ENCODE measurements at regions of chr1 and their contacts with region 1.

Region 1: GRCh38 chr1:59220356-59220755 is 76.5 kb upstream of the FGGY start:
- DNase-seq: no peak
- ATAC-seq: no peak
- H3K4me3 ChIP-seq: no peak overlapping the region
- H3K27ac ChIP-seq: no peak overlapping the region
- H3K4me1 ChIP-seq: no peaks in the 10 kb centered on the region
- H3K27me3 ChIP-seq: no peaks in the 10 kb centered on the region
- CTCF ChIP-seq: no peak

Region 2: DNA sequence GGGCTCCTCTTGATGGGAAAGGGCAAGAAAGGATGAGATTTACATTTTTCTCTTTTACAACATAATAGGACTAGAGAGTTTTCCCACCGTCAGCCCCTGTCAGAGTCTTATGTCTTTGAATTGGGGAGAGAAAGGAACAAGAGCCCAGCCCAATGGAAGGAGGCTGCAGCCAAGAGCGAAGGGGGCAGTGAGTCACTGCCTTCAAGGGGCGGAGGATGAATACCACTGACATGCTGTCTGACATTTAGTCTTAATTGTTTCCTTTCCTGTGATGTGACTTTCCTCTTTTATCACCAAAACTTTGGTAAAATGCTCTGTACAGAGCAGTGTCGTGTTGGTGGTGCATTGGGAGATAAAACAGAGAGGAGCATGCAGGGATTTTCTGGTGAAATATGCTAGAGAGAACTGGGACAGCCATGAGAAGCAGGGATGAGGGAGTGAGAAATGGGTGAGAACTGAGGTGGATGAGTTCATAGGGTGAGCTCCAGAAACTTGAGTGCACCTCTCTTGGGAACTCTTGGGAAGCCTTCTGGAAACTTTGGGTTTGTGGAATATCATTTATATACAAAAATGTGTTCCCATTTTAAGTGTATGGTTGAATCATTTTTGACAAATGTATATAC is 103.3 kb before region 1 on chr1:
- CTCF ChIA-PET with region 1: no interaction called
- POLR2A ChIA-PET with region 1: no interaction called
- in situ Hi-C with region 1: no loop called
- intact Hi-C with region 1: no loop called
- DNase-seq: no peak
- ATAC-seq: no peak
- H3K4me3 ChIP-seq: no peak overlapping the region
- H3K27ac ChIP-seq: no peak overlapping the region
- H3K4me1 ChIP-seq: no peaks in the 10 kb centered on the region
- H3K27me3 ChIP-seq: no peaks in the 10 kb centered on the region
- CTCF ChIP-seq: no peak

Region 3: DNA sequence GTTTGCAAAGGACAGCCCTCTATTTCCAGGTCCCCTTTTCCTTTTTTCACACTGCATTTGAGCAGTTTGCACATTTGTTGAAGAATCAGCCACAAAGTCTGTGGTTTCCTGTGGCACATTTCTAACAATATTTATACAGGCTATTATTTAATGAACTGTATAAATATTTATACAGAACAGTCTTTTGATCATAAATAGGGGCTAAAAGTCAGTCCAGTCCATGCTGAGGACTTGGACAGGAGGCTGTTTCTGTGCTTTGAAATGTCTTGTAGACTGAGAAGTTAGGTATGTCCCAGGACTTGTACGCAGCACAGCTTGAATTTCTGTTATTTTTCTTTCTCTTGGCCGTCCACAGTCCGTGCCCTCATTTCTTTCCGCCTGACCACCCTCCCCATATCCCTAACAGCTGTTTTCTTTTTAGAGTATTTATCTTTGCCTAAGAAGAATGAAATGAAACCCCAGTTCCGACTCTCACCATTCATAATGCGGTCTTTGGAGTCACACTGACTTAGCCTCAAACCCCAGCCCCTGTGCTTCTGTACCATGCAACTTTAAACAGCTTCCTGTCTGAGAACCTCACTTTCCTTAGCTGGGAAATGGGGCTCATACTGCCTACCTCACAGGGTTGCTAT is 96.3 kb after region 1 on chr1:
- CTCF ChIA-PET with region 1: no interaction called
- POLR2A ChIA-PET with region 1: interaction called, 16 read pairs
- in situ Hi-C with region 1: no loop called
- intact Hi-C with region 1: no loop called
- DNase-seq: no peak
- ATAC-seq: no peak
- H3K4me3 ChIP-seq: no peak overlapping the region
- H3K27ac ChIP-seq: no peak overlapping the region
- H3K4me1 ChIP-seq: no peaks in the 10 kb centered on the region; the same call in 1 of the 2 replicates
- H3K27me3 ChIP-seq: no peaks in the 10 kb centered on the region
- CTCF ChIP-seq: no peak

Region 4: GRCh38 chr1:59675936-59676335 is 455.6 kb after region 1 on chr1:
- CTCF ChIA-PET with region 1: interaction called, 10 read pairs
- POLR2A ChIA-PET with region 1: no interaction called
- in situ Hi-C with region 1: no loop called
- intact Hi-C with region 1: no loop called
- DNase-seq: no peak
- ATAC-seq: no peak
- H3K4me3 ChIP-seq: no peak overlapping the region
- H3K27ac ChIP-seq: no peak overlapping the region
- H3K4me1 ChIP-seq: no peaks in the 10 kb centered on the region
- H3K27me3 ChIP-seq: no peaks in the 10 kb centered on the region
- CTCF ChIP-seq: no peak